Activated naive CD4-positive, alpha-beta T cell treated with anti-CD3 and anti-CD28 coated beads for 36 hours (primary cell): ENCODE measurements at regions of chr3 and their contacts with region 1.

Region 1: GRCh38 chr3:121545574-121546455 is at the start of gene POLQ:
- DNase-seq: peak; percentile 94
- H3K4me3 Mint-ChIP-seq: peak within 1 kb of the TSS; percentile 95
- H3K27ac Mint-ChIP-seq: peak within 1 kb of the TSS; percentile 92
- H3K4me1 Mint-ChIP-seq: no peaks in the 10 kb centered on the region
- H3K27me3 Mint-ChIP-seq: no peaks in the 10 kb centered on the region
- total RNA-seq, gene POLQ: 20.1 to 20.8 TPM

Region 2: GRCh38 chr3:120742198-120742849 is 803.5 kb before region 1 on chr3 and contains the starts of genes GTF2E1 and RABL3:
- CTCF ChIA-PET with region 1: no interaction called
- intact Hi-C with region 1: loop called (anchors 2 kb)
- DNase-seq: peak; percentile 98
- H3K4me3 Mint-ChIP-seq: peak within 1 kb of the TSS; percentile 90
- H3K27ac Mint-ChIP-seq: peak within 1 kb of the TSS; percentile 96
- H3K4me1 Mint-ChIP-seq: peaks cover 33% of the 10 kb centered on the region
- H3K27me3 Mint-ChIP-seq: no peaks in the 10 kb centered on the region
- total RNA-seq, gene GTF2E1: 13.2 TPM
- total RNA-seq, gene RABL3: 34.7 to 36.8 TPM

Region 3: DNA sequence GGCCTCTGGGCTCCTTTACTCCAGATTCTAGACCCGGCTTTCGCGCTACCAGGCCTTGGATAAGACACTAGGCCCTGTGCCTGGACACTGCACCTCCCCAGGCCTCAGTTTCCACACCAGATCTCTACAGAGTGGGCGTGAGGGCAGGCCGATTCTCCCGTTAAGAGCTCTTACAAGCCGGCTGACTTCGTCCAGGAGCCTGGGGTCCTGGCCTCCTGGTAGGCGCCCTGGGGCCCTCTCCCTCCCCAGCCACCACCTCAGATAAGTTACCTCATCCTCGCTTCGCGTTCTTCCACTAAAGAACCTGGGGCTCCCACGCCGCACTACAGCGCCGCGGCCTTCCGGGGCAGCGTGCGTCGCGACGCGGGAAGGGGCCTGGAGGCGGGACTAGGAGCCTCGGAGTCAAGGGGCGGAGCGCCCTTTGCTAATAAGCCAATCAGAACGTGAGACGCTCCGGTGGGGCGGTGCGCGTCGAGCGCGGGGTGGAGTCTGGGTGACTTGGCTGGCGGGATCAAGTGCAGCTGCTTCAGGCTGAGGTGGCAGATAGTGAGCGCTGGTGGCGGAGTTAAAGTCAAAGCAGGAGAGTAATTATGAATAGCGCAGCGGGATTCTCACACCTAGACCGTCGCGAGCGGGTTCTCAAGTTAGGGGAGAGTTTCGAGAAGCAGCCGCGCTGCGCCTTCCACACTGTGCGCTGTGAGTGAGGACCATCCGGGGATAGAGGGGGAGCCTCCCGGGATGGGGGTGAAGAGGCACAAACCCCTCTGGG is 289.1 kb after region 1 on chr3 and contains the starts of genes EAF2 and IQCB1:
- CTCF ChIA-PET with region 1: no interaction called
- intact Hi-C with region 1: loop called (anchors 1 kb)
- DNase-seq: peak; percentile 97
- H3K4me3 Mint-ChIP-seq: peak within 1 kb of the TSS; percentile 95
- H3K27ac Mint-ChIP-seq: peak within 1 kb of the TSS; percentile 88
- H3K4me1 Mint-ChIP-seq: peaks cover 36% of the 10 kb centered on the region
- H3K27me3 Mint-ChIP-seq: no peaks in the 10 kb centered on the region
- total RNA-seq, gene EAF2: 8.2 to 9.3 TPM
- total RNA-seq, gene IQCB1: 36.5 to 37.8 TPM

Region 4: GRCh38 chr3:121995161-121996137 is 449.6 kb after region 1 on chr3:
- CTCF ChIA-PET with region 1: interaction called, 12 read pairs
- intact Hi-C with region 1: loop called (anchors 1 kb)
- DNase-seq: peak; percentile 45
- H3K4me3 Mint-ChIP-seq: no peak overlapping the region
- H3K27ac Mint-ChIP-seq: no peak overlapping the region
- H3K4me1 Mint-ChIP-seq: peaks cover 20% of the 10 kb centered on the region
- H3K27me3 Mint-ChIP-seq: no peaks in the 10 kb centered on the region

Region 5: GRCh38 chr3:122146466-122146865 is 600.7 kb after region 1 on chr3:
- CTCF ChIA-PET with region 1: interaction called, 3 read pairs
- intact Hi-C with region 1: loop called (anchors 1 kb)
- DNase-seq: peak; percentile 86
- H3K4me3 Mint-ChIP-seq: no peak overlapping the region
- H3K27ac Mint-ChIP-seq: peak overlapping the region; percentile 46
- H3K4me1 Mint-ChIP-seq: peaks cover 28% of the 10 kb centered on the region
- H3K27me3 Mint-ChIP-seq: peaks cover 1% of the 10 kb centered on the region

Region 6: GRCh38 chr3:122365073-122365472 is 819.3 kb after region 1 on chr3:
- CTCF ChIA-PET with region 1: no interaction called
- intact Hi-C with region 1: loop called (anchors 5 kb)
- DNase-seq: no peak
- H3K4me3 Mint-ChIP-seq: no peak overlapping the region
- H3K27ac Mint-ChIP-seq: peak overlapping the region; percentile 70
- H3K4me1 Mint-ChIP-seq: peaks cover 17% of the 10 kb centered on the region
- H3K27me3 Mint-ChIP-seq: no peaks in the 10 kb centered on the region

Region 7: DNA sequence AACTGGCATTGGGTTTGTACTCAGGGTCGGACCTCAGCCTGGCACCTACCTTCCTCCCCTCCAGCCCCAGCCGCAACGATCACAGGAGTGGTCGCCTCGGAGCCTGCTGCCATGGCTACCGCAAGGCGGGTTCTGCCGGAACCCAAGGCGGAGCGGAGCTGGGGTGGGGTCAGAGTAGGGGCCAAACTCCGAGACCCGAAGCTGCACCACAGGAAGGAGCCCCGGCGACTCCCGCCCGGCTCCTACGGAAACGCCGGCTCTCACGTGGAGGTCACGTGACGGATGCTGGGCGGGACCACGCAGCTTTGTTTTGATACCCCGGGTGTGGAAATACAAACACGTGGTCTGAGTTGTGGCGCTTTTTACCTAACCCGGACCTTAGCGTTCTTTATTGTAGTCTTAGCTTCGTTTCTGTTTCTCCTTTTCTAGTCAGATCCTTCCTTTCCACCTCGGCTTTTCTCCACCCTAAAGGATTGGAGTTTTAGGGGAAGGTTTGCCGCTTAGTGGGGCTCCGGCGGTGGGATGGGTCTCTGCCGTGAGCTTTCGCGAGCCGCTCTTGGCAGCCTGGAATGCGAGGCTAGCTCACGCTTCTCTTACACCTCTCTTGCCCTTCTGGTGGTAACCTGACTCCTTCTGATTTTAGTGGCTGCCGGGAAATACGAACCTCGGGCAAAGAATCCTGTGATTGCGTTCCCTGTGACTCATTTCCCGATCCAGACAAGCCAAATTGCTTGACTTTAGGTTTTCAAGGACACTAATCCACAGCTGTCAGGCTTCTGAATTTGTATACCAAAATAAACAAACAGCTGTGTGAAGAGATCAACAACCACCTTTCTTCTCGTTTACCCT is 1248.0 kb after region 1 on chr3 and contains the start of gene HSPBAP1:
- CTCF ChIA-PET with region 1: no interaction called
- intact Hi-C with region 1: loop called (anchors 10 kb)
- DNase-seq: peak; percentile 92
- H3K4me3 Mint-ChIP-seq: peak within 1 kb of the TSS; percentile 86
- H3K27ac Mint-ChIP-seq: peak within 1 kb of the TSS; percentile 80
- H3K4me1 Mint-ChIP-seq: peaks cover 30% of the 10 kb centered on the region
- H3K27me3 Mint-ChIP-seq: no peaks in the 10 kb centered on the region
- total RNA-seq, gene HSPBAP1: 3.0 to 3.2 TPM